ENCODE measurements at regions of chr15 and their contacts with region 1.

Region 1: DNA sequence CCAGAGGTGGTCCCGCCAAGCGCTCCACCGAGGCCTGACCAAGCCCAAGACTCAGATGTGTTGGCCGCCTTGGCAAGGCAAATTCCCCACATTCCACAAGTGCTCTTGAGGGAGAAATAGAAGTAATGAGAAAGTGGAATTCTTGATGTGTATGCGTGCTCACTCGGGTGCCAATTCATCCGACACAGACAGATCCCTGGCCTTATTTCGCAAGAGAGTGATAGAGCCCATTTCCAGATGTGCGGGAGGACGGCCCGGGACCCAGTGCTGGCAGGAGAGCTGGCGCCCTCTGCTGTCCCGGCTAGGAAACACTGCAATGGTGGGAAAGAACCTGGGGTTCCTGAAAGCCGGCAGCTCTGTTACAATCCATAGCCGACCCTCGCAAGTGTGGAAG is 76.0 kb downstream of the HMG20A start:
- DNase-seq: peak; percentile 83 to 91 (median 84)
- H3K4me3 ChIP-seq: peak overlapping the region in 1 of 3 donors; percentile 33
- H3K27ac ChIP-seq: peak overlapping the region; percentile 67 to 71
- H3K4me1 ChIP-seq: peaks cover 2 to 23% (median 22%) of the 10 kb centered on the region in 3 donors
- H3K27me3 ChIP-seq: no peaks in the 10 kb centered on the region
- CTCF ChIP-seq: peak; percentile 82

Region 2: GRCh38 chr15:77186594-77187011 is 310.1 kb before region 1 on chr15:
- intact Hi-C with region 1: loop called (anchors 10 kb)
- DNase-seq: peak in 3 of 5 donors; percentile 18 to 65 (median 37)
- H3K4me3 ChIP-seq: no peak overlapping the region
- H3K27ac ChIP-seq: peak overlapping the region in 1 of 2 donors; percentile 74
- H3K4me1 ChIP-seq: peaks cover 0 to 6% (median 5%) of the 10 kb centered on the region in 3 donors
- H3K27me3 ChIP-seq: no peaks in the 10 kb centered on the region
- CTCF ChIP-seq: peak; percentile 54